Endothelial cell of umbilical vein (primary cell): ENCODE measurements at regions of chr13 and their contacts with region 1.

Region 1: DNA sequence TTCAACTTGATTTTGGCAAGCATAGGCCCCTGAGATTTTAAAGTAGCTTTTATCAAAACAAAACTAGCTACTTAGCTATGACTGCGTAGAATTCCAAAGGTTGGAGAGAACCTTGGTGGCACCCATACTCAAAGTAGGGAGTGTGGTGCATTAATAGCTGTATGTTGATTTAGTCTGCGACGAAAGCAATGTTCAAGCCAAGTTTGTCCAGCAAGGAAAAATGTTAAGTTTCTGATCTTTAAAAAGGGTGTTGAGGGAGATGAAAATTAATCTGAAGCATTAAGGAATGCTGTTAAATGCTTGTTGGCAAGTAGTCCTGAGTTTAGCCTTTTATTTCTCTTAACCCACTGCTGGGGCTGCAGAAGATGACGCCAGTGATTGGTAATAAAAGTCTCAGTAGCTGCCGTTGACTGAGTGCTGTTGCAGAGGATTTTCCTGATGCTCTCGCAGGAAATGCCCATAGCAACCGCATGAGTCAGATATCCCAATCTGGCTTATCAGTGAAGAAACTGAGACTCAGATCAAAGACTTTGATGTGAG is 75.9 kb upstream of the RNF113B start:
- DNase-seq: peak; percentile 84
- H3K4me3 ChIP-seq: peak overlapping the region in 1 of 3 experiments; percentile 10
- H3K27ac ChIP-seq: peak overlapping the region; percentile 54
- H3K4me1 ChIP-seq: peaks cover 25% of the 10 kb centered on the region
- H3K27me3 ChIP-seq: no peaks in the 10 kb centered on the region
- CTCF ChIP-seq: no peak
- POLR2A ChIP-seq: no peak

Region 2: GRCh38 chr13:98216135-98216565 is 36.9 kb before region 1 on chr13:
- CTCF ChIA-PET with region 1: interaction called, 3 read pairs
- POLR2A ChIA-PET with region 1: no interaction called
- dilution Hi-C with region 1: no loop called
- intact Hi-C with region 1: loop called (anchors 2 kb)
- DNase-seq: peak; percentile 70
- H3K4me3 ChIP-seq: no peak overlapping the region
- H3K27ac ChIP-seq: no peak overlapping the region
- H3K4me1 ChIP-seq: peaks cover 18% of the 10 kb centered on the region
- H3K27me3 ChIP-seq: no peaks in the 10 kb centered on the region
- CTCF ChIP-seq: no peak
- POLR2A ChIP-seq: no peak

Region 3: GRCh38 chr13:98267080-98267912 is 14.3 kb after region 1 on chr13:
- CTCF ChIA-PET with region 1: no interaction called
- POLR2A ChIA-PET with region 1: no interaction called
- dilution Hi-C with region 1: no loop called
- intact Hi-C with region 1: no loop called
- DNase-seq: peak; percentile 50
- H3K4me3 ChIP-seq: no peak overlapping the region
- H3K27ac ChIP-seq: no peak overlapping the region
- H3K4me1 ChIP-seq: peaks cover 6% of the 10 kb centered on the region
- H3K27me3 ChIP-seq: no peaks in the 10 kb centered on the region
- CTCF ChIP-seq: no peak
- POLR2A ChIP-seq: no peak

Region 4: GRCh38 chr13:98290261-98290660 is 37.3 kb after region 1 on chr13:
- CTCF ChIA-PET with region 1: no interaction called
- POLR2A ChIA-PET with region 1: no interaction called
- dilution Hi-C with region 1: no loop called
- intact Hi-C with region 1: loop called (anchors 1 kb)
- DNase-seq: no peak
- H3K4me3 ChIP-seq: no peak overlapping the region
- H3K27ac ChIP-seq: no peak overlapping the region
- H3K4me1 ChIP-seq: no peaks in the 10 kb centered on the region
- H3K27me3 ChIP-seq: no peaks in the 10 kb centered on the region
- CTCF ChIP-seq: no peak
- POLR2A ChIP-seq: no peak